PC-9 (cell line): ENCODE measurements at regions of chr15 and their contacts with region 1.

Region 1: DNA sequence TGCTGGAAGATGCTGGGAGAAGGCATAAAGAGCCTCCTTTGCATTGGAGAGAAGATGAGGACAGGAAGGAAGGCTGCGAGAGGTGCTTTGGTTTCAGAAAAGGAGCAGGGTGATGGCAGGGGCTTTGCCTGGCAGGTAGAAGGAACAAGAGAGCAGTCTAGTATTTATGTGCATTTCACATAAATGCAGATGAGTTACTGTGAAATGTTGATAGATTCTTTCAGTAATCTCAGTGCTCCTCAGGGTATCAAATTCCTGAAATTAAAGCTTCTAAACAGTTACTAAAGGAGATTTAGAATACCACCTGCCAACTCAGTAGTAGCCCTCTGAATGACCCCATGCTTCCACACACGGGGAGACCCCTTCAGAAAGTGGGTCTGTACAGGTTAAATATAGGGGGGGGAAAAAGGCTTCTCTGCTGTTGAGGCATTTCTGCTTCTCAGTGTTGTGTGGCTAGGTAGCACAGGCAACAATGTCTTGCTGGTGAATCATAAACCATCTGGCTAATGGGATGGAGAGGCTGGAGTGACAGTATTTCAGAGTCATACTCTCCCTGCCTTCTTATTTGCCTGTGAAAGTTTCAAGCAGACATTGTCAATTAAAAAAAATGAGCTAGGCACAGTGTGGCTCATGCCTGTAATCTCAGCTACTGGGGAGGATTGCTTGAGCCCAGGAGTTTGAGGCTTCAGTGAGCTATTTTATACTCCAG is 14.3 kb upstream of the FBXL22 start:
- DNase-seq: no peak
- H3K4me3 ChIP-seq: no peak overlapping the region
- H3K27ac ChIP-seq: no peak overlapping the region
- H3K4me1 ChIP-seq: 0 out of 2 replicates have a peak, but pooled peaks cover 10% of the 10 kb centered on the region
- H3K27me3 ChIP-seq: no peaks in the 10 kb centered on the region
- CTCF ChIP-seq: no peak

Region 2: GRCh38 chr15:63244399-63244798 is 338.5 kb before region 1 on chr15:
- CTCF ChIA-PET with region 1: no interaction called
- POLR2A ChIA-PET with region 1: interaction called, 10 read pairs
- intact Hi-C with region 1: no loop called
- DNase-seq: no peak
- H3K4me3 ChIP-seq: no peak overlapping the region
- H3K27ac ChIP-seq: no peak overlapping the region
- H3K4me1 ChIP-seq: peaks cover 15% of the 10 kb centered on the region
- H3K27me3 ChIP-seq: no peaks in the 10 kb centered on the region
- CTCF ChIP-seq: no peak